Calu3 (cell line): ENCODE measurements at regions of chr6 and their contacts with region 1.

Region 1: DNA sequence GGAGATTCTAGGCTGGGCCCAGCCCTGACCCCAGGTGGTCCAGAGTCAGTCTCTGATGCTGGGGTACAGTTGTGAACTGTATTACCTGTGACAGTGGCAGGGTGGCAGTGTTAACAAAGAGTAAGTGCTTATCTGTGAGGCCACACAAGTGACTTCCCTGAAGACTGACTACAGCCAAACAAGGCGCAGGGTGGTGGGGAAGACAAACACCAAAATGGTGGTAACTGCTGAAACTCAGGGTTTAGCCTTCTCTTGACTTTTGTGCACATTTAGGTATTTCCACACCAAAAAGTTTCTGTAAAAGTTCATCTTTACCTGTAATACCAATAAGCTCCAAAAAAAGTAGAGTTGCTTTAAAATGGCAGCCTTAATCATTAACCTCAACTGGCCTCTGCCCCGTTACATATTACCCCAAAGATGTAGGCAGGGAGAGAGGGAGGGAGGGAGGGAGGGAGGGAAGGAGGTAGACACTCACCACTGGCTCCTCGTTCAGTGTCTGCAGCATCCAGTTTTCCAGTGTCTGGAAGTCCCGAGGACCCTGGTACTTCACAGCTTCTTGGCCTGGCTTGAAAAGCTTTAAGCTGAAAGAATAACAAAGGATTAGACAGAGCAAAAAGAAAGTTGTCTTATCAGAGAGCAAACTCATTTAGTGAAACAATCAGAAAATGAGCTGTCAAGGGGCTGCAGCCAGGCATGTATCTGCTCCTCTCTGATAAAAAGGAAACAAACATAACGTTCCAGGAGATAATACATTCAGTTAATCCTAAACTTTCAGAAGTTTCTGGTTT is 11.3 kb downstream of the TXNDC5 start:
- DNase-seq: peak; percentile 3
- H3K4me3 Mint-ChIP-seq: no peak overlapping the region
- H3K27ac Mint-ChIP-seq: no peak overlapping the region
- H3K4me1 Mint-ChIP-seq: no peaks in the 10 kb centered on the region
- H3K27me3 Mint-ChIP-seq: no peaks in the 10 kb centered on the region
- CTCF ChIP-seq: no peak

Region 2: DNA sequence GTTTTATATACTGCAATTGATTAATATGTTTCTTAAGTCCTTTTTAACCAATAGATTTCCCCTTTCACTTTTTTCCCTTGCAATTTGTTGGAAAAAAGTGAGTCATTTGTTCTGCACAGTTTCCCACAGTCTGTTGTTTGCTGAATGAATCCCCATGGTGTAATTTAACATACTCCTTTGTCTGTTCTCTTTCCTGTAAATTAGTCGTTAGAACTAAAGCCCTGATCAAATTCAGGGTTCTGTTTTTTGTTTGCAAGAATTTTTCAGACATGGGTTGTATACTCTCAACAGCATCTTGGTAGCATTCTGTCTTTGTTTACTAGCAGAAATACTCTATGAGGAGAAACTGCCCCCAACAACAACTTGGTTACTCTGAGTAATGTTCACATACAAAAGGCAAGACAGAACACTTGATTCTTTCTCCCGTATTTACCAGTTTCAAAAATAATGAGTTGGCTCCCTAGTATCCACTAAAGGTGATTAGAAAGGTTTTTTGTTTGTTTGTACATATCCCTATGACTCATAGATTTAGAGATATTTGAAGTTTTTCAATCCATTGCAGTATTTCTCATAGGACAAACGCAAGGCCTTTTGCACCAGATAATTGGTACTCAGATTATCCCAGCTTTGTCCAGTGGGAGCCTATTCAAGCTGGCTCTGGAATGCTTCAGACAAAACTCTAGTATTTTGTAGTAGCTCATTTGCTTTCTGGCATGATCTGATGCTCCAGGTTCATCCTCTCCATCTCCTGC is 148.4 kb after region 1 on chr6:
- CTCF ChIA-PET with region 1: no interaction called
- intact Hi-C with region 1: no loop called
- DNase-seq: no peak
- H3K4me3 Mint-ChIP-seq: no peak overlapping the region
- H3K27ac Mint-ChIP-seq: no peak overlapping the region
- H3K4me1 Mint-ChIP-seq: no peaks in the 10 kb centered on the region
- H3K27me3 Mint-ChIP-seq: no peaks in the 10 kb centered on the region
- CTCF ChIP-seq: no peak

Region 3: DNA sequence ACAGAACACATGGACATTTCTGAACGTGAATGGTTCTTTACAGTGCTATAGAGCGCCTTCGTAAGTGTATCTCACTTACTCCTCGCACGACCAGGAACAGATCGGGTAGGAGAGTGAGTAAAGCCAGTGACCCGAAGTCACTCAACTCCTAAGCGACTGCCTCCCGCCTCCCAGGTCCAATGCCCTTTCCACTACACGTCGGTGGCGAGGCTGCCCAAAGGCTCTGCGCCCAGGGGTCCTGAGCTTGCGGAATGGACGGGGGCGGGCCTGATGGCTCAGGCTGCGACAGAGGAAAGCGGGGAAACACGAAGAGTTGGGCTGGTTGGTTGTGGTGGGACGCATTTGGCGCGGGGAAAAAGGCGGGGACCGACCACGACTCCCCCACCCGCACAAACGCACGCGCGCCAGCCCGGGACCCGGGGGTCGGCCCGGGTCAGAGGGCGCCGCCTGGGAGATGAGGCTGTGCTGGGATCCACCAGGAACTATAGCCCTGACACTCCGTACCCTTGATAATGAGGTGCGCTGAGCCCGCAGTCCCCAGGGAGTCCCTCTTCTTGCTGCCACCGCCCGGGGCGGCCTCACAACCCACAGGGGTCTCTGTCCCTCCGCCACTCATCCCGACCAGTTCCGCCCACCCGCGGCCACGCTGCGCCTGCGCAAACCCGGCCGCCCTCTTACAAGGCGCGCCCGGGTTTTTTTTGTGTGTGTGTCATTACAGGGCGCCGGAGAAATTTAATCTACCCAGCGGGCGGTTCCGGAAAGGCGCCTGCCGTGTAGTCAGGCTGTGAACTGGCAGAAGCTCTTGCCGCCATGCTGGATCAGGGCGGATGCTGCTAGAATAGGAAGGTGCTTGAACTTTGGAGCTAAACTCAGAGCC is 164.7 kb after region 1 on chr6 and contains the start of gene BLOC1S5:
- CTCF ChIA-PET with region 1: no interaction called
- intact Hi-C with region 1: loop called (anchors 5 kb)
- DNase-seq: peak; percentile 90
- H3K4me3 Mint-ChIP-seq: peak within 1 kb of the TSS; percentile 89
- H3K27ac Mint-ChIP-seq: peak within 1 kb of the TSS; percentile 56
- H3K4me1 Mint-ChIP-seq: no peaks in the 10 kb centered on the region
- H3K27me3 Mint-ChIP-seq: no peaks in the 10 kb centered on the region
- CTCF ChIP-seq: no peak
- total RNA-seq, gene BLOC1S5: 8.0 and 10.5 TPM in 2 replicates